Mammary epithelial cell (primary cell): ENCODE measurements at regions of chr5 and their contacts with region 1.

Region 1: DNA sequence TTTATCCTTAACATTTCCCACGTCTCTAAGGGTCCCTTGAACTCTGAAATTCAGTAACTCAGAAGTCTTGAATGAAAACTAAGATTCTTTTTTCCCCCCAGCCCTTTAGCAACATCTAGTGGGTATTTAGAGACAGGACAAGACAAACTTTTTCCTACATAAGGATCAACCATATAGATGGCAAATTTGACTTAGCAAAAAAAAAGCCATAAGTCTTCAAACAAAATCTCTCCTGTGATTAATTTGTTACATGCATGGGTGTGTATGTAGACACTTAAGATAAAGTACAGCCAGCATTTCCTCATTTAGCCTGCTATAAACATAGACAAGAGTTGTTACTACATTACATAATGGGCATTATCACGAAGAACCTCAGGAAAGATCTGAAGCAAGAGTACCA is 29.1 kb upstream of the ANKRD31 start:
- DNase-seq: peak; percentile 33
- H3K4me3 ChIP-seq: no peak overlapping the region
- H3K27ac ChIP-seq: no peak overlapping the region
- H3K4me1 ChIP-seq: no peaks in the 10 kb centered on the region
- H3K27me3 ChIP-seq: no peaks in the 10 kb centered on the region
- CTCF ChIP-seq: peak; percentile 69 to 84

Region 2: DNA sequence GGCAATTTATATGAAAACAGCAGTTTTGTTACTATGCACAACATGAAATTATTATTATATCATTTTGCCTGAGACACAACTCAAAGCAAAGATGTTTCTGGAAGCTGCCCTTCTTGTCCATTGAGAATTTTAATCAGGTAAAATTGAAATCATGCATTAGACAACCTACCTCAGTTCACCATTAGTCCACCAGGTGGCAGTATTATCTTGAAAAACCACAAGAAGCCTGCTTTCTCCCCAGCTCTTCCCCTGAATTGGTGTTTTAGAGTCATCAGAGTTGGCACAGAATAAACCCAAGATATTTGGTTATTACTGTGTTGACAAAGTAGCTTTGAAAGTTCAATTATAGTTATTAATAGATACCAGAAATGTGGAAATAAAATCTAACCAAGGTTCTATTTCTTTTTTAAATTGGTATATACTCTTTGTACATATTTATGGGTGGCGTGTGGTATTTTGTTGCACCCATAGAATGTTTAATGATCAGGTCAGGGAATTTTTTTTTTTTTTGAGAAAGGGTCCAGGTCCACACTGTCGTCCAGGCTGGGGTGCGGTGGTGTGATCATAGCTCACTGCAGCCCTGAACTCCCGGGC is 1674.5 kb before region 1 on chr5:
- CTCF ChIA-PET with region 1: no interaction called
- dilution Hi-C with region 1: no loop called
- in situ Hi-C with region 1: no loop called
- intact Hi-C with region 1: no loop called
- DNase-seq: peak; percentile 69
- H3K4me3 ChIP-seq: no peak overlapping the region
- H3K27ac ChIP-seq: no peak overlapping the region
- H3K4me1 ChIP-seq: peaks cover 7% of the 10 kb centered on the region
- H3K27me3 ChIP-seq: no peaks in the 10 kb centered on the region
- CTCF ChIP-seq: peak; percentile 71 to 86

Region 3: GRCh38 chr5:74673011-74673790 is 592.5 kb before region 1 on chr5:
- CTCF ChIA-PET with region 1: no interaction called
- dilution Hi-C with region 1: no loop called
- in situ Hi-C with region 1: loop called in 1 of 2 experiments (anchors 25 kb)
- intact Hi-C with region 1: no loop called
- DNase-seq: no peak
- H3K4me3 ChIP-seq: no peak overlapping the region
- H3K27ac ChIP-seq: no peak overlapping the region
- H3K4me1 ChIP-seq: peaks cover 7% of the 10 kb centered on the region
- H3K27me3 ChIP-seq: no peaks in the 10 kb centered on the region
- CTCF ChIP-seq: peak in 1 of 2 donors; percentile 57

Region 4: DNA sequence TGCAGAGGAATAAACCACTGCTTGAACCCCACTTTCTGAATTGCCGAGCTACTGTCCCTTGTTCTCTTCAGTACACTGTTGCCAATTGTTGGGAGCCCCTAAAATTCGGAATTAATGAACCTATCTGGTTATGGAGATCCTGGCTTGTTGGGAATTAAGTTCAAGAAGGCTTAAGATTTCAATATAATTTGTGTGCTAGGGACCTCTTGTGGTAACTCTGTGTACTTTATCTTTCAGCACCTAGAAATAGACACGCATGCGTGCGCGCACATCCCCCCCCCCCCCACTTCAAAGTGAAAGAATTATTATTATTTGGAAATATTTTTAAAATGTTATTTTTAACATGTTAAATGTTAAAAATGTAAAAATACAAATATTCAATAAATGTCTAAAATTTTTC is 346.2 kb before region 1 on chr5:
- CTCF ChIA-PET with region 1: interaction called, 10 read pairs
- dilution Hi-C with region 1: no loop called
- in situ Hi-C with region 1: no loop called
- intact Hi-C with region 1: no loop called
- DNase-seq: peak; percentile 45
- H3K4me3 ChIP-seq: no peak overlapping the region
- H3K27ac ChIP-seq: no peak overlapping the region
- H3K4me1 ChIP-seq: peaks cover 5% of the 10 kb centered on the region
- H3K27me3 ChIP-seq: no peaks in the 10 kb centered on the region
- CTCF ChIP-seq: peak; percentile 43 to 57

Region 5: DNA sequence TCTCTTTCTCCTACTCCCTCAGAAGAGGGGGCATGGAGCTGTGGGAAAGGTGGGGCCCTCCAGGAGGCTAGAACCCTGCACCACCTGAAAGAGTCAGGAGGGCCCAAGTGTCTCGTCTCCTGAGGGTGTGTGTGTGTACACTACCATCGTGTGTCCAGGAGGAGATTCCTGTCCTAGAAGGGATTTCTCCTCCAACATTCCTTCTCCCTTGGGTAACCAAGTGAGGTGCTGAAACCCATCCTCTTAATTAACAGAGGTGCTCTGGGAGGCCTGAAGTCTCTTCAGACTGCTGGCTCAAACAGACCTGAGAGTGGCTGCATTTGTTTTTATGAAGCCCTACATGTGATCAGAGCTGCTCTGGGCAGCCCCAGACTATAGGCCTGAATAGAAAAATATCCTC is 338.4 kb before region 1 on chr5:
- CTCF ChIA-PET with region 1: interaction called, 11 read pairs
- dilution Hi-C with region 1: no loop called
- in situ Hi-C with region 1: loop called (anchors 5 to 10 kb)
- intact Hi-C with region 1: loop called (anchors 1 kb)
- DNase-seq: no peak
- H3K4me3 ChIP-seq: no peak overlapping the region
- H3K27ac ChIP-seq: no peak overlapping the region
- H3K4me1 ChIP-seq: no peaks in the 10 kb centered on the region
- H3K27me3 ChIP-seq: no peaks in the 10 kb centered on the region
- CTCF ChIP-seq: no peak

Region 6: DNA sequence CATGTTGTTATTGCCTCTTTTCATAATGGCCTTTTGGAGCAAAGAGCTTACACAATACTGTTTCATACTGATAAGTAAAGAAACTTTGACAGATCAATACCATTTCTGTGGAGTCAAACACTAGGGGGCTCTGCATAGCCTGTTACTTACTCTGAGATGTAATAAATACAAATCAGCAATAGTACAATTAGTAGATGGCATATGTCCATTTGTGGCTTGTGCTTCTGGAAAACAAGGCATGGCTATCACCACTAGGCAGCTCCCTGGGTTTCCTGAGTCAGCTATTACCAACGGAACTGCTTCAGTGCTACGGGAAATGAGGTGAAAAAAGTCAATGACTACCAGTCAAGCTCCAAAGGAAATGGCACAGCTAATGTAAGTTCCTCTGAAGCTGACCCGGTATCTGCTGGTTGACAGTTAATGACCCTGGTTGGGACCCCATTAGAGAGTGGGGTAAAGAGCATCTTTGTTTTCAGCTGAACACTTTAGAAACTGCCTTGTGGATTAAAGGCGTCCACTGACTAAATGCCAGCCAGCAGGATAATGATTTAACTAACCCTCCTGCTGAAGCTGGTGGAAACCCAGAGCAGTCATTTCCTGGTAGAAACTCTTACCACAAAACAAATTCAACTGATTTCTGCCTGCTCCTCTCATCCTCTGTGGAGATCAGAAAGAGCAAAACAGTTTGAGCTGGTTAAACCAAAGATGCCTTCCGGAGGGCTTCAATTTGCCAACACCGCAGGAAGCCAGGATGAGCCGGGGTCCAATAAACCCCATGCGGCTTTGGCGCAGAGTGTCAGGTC is 330.6 kb before region 1 on chr5:
- CTCF ChIA-PET with region 1: no interaction called
- dilution Hi-C with region 1: no loop called
- in situ Hi-C with region 1: loop called in 1 of 2 experiments (anchors 10 kb)
- intact Hi-C with region 1: loop called (anchors 2 kb)
- DNase-seq: peak; percentile 59
- H3K4me3 ChIP-seq: no peak overlapping the region
- H3K27ac ChIP-seq: no peak overlapping the region
- H3K4me1 ChIP-seq: no peaks in the 10 kb centered on the region
- H3K27me3 ChIP-seq: no peaks in the 10 kb centered on the region
- CTCF ChIP-seq: peak; percentile 36 to 52

Region 7: DNA sequence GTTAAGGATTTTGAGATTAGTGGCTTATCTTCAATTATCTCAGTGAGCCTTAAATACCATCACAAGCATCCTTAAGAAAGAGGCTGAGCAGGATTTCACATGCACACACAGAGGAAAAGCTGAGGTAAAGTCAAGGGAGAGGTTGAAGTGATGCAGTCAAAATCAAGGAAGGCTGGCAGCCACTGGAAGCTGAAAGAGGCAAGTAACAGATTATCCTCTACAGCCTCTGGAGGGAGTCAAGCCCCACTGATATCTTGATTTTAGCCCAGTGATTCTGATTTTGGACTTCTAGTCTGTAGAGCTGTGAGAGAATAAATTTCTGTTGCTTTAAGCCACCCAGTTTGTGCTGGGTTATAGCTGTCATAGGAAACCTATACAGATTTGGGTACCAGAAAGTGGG is 109.1 kb before region 1 on chr5:
- CTCF ChIA-PET with region 1: interaction called, 4 read pairs
- dilution Hi-C with region 1: no loop called
- in situ Hi-C with region 1: no loop called
- intact Hi-C with region 1: loop called (anchors 1 kb)
- DNase-seq: peak; percentile 19
- H3K4me3 ChIP-seq: no peak overlapping the region
- H3K27ac ChIP-seq: no peak overlapping the region
- H3K4me1 ChIP-seq: peaks cover 7% of the 10 kb centered on the region
- H3K27me3 ChIP-seq: no peaks in the 10 kb centered on the region
- CTCF ChIP-seq: peak; percentile 24 to 37

Region 8: DNA sequence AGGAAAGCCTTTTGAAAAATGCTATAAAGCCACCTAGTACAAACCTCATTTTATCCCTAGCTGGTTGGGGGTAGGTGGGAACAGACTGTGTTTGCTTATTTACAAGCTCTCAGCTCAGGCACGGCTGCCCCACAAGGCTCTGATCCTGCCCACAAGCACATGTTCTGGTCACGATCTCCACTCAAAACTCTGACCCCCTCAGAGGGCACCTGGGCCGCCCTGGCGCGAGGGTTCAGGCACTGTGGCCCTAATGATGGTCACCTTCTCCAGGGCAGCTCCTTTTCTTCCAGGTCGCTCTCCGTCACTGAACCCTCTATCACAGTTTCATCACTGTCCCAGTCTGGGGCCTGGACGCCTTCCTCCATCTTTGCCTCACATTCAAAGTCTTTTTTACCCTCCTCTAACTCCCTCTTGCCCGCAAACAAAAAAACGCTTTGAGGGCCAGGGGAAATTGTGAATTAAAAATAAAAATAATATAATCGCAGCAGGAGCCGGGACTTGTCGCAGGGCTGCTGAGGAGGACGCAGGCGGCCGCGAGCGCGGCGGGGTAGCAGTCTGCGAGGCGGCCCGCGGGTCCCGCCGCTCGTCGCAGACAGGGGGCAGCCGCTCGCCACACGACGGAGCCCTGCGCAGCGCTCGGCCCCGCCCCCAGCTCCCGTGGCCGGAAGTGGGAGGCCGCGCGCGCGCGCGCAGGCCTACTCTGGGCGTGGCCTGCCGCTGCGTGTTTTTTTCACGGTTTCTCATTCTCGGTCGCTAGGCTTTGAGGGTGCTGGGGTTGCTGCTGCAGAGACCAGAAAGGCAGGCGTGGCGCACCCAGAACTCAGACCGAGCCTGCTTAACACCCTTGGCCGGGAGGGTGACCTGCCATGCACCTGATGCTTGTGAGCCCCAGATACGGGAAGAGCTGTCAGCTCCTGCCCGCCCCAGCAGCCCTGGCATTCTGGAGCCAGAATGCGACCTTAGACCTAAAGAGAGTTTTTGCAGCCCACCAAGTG is 29.1 kb before region 1 on chr5 and contains the start of gene ANKRD31:
- CTCF ChIA-PET with region 1: no interaction called
- dilution Hi-C with region 1: no loop called
- in situ Hi-C with region 1: no loop called
- intact Hi-C with region 1: loop called (anchors 1 kb)
- DNase-seq: peak; percentile 64
- H3K4me3 ChIP-seq: peak within 1 kb of the TSS; percentile 69 to 72 (median 71)
- H3K27ac ChIP-seq: no peak within 1 kb of the TSS
- H3K4me1 ChIP-seq: peaks cover 29% of the 10 kb centered on the region
- H3K27me3 ChIP-seq: no peaks in the 10 kb centered on the region
- CTCF ChIP-seq: peak; percentile 53 to 62
- total RNA-seq, gene ANKRD31: 0.26 to 0.33 TPM